Cardiac septum (tissue), 1 donor: ENCODE measurements at regions of chr4 and their contacts with region 1.

Region 1: DNA sequence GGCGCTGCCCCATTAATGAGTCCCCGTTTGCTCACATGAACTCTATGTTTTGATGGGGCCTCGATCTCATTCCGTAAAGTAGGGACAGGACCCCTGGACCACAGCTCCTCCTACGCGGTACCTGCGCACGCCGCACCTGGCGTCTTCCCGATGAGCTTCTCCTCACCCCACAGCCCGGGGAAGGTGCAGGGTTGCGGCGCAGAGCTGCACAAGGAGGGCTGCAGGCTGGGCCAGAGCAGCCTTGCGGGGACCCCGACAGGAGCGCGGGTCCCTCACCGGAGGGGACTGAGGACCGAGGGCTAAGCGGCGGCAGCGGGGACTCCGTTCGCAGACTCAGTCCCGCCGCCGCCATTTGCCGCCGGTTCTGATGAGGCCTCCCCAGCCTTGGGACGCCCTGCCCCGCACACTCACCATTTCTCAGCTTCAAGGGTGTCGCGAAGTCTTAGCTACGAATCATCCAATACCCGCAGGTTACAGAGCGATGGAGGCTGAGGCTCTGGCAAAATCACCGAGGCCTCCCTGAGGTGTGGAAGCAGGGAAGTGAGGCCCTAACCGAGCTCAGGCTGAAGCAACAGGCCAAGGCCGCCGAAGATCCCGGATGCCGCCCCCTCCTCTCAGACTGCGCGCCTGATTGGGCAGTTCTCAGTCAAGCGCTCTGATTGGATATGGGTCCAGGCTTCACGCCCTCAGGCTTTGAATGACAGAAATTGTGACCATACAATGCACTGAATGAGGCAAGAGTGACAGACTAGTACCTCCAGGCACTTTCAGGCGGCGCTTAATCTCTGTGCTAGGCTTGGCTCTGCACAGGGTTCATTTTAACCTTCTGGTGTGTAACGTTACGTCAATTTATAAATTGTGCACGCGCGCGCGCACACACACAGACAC is 25.1 kb downstream of the ZNF721 start:
- DNase-seq: peak; percentile 97

Region 2: DNA sequence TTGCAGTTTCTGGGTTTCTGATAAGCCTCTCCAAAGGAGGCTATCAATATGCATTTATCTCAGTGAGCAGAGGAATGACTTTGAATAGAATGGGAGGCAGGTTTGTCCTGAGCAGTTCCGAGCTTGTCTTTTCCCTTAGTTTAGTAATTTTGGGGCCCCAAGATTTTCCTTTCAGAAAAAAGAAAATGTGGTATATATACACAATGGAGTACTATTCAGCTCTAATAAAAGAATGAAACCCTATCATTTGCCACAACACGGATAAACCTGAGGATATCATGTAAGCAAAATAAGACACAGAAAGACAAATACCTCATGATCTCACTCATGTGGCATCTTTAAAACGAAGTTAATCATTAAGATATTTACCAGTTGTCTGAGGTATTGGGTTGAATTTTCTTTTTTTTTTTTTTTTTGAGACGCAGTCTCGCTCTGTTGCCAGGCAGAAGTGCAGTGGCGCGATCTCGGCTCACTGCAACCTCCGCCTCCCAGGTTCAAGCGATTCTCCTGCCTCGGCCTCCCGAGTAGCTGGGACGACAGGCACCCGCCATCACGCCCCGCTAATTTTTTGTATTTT is 24.6 kb after region 1 on chr4:
- intact Hi-C with region 1: loop called (anchors 2 kb)
- DNase-seq: no peak